Heart left ventricle (tissue), 16 donors: ENCODE measurements at regions of chr14 and their contacts with region 1.

Region 1: DNA sequence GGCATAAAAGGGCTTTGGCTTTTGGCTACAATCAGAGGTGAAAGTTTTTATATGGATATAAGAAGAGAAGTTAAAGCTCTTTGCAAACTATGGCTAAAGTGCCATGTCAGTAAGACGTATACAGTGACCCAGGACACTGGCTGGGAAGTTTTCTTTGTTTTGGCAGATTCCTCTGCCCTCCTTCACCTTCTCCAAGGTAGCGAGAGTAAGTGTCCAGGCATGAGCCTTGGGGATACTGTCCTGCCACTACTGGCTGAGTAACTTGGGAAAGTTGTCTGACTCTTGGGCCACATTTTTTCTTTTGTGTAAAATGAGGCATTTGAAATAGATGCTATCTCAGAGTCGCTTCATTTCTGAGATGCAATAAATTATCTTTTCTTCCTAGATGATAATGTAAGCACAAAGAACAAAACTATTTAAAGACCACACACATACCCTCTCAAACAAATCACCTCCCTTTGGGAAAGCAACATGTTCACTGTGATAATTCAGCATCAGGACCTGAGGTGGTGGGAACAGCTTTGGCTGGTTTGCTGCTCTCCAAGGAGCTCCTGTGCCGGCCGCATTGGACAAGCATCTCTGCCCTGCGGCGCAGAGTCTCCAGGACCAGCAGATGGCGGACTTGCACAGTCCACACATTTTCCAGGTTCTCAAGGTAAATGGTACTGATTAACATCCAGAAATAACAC is 106.3 kb downstream of the PTCSC3 start:
- DNase-seq: peak in 4 of 5 donors; percentile 18 to 63 (median 37)
- ATAC-seq: peak in 3 of 4 donors; percentile 60 to 66 (median 64)
- H3K4me3 ChIP-seq: no peak overlapping the region
- H3K27ac ChIP-seq: no peak overlapping the region
- H3K4me1 ChIP-seq: peaks cover 0 to 4% (median 0%) of the 10 kb centered on the region in 12 donors
- H3K27me3 ChIP-seq: peaks cover 0 to 36% (median 4%) of the 10 kb centered on the region in 9 donors
- CTCF ChIP-seq: peak in 11 of 12 donors; percentile 27 to 63 (median 43)
- POLR2A ChIP-seq: no peak

Region 2: DNA sequence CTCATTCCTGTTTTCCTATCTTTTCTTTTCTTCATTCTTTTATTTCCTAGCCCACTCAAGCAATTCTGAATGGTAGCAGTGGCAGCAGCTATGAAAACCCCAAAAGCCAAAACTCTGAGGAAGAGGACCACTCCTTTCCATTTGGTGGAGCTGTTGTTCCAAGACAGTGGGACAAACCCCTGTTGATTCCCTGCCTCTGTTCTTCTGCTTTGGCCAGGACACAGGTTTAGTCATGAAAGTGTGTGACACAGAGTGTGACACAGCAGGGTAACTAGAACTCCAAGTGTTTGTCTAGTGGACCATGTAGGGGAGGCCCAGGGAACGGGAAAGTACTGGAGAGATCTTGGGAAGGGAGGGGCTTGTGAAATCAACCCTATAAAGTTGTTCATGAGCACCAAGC is 35.2 kb after region 1 on chr14:
- intact Hi-C with region 1: no loop called
- DNase-seq: no peak
- ATAC-seq: no peak
- H3K4me3 ChIP-seq: no peak overlapping the region
- H3K27ac ChIP-seq: no peak overlapping the region
- H3K4me1 ChIP-seq: no peaks in the 10 kb centered on the region
- H3K27me3 ChIP-seq: peaks cover 0 to 5% (median 0%) of the 10 kb centered on the region in 9 donors
- CTCF ChIP-seq: no peak
- POLR2A ChIP-seq: no peak

Region 3: DNA sequence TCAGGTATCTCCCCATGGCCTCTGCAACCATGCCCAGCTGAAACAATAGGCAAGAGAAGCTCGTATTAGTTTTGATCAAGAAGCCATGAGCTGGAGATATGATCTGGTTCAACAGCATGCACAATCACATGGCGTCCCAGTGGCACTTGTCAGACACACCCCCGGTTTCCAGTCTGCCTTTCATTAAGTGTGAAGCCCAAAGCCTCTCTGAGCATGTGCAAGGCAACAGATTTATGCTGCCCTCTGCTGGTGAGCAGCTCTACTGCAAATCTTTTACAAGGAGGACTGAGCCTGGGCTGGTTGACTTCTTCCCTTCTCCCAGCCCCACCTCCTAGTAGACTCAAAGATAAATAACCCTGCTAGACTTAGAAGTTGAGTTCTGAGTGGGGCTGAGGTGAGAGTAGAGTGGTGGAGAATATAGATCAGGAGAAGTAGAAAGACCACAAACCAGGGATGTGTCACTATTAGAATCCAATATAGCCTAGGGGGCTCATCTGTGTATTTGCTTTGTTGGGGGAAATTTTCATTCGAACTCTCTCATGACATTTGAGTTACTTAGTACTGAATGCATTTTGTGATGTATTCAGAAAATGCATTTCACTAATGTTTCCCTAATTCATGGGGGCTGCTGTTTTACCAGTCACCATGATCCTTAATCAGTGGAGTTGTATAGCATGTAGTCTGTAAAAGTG is 304.0 kb after region 1 on chr14:
- intact Hi-C with region 1: loop called in 3 of 10 experiments (anchors 5 to 10 kb)
- DNase-seq: peak; percentile 35 to 62 (median 44)
- ATAC-seq: peak in 3 of 4 donors; percentile 49 to 81 (median 76)
- H3K4me3 ChIP-seq: no peak overlapping the region
- H3K27ac ChIP-seq: no peak overlapping the region
- H3K4me1 ChIP-seq: no peaks in the 10 kb centered on the region
- H3K27me3 ChIP-seq: peaks cover 0 to 6% (median 0%) of the 10 kb centered on the region in 9 donors
- CTCF ChIP-seq: peak; percentile 50 to 79 (median 70)
- POLR2A ChIP-seq: no peak

Region 4: GRCh38 chr14:36604757-36605505 is 534.8 kb after region 1 on chr14:
- intact Hi-C with region 1: loop called in 1 of 10 experiments (anchors 10 kb)
- DNase-seq: peak in 2 of 5 donors; percentile 20 to 23
- ATAC-seq: peak in 1 of 4 donors; percentile 51
- H3K4me3 ChIP-seq: no peak overlapping the region
- H3K27ac ChIP-seq: no peak overlapping the region
- H3K4me1 ChIP-seq: no peaks in the 10 kb centered on the region
- H3K27me3 ChIP-seq: peaks cover 0 to 37% (median 7%) of the 10 kb centered on the region in 9 donors
- CTCF ChIP-seq: peak; percentile 67 to 86 (median 72)
- POLR2A ChIP-seq: no peak